PC-9 (cell line): ENCODE measurements at regions of chrX and their contacts with region 1.

Region 1: DNA sequence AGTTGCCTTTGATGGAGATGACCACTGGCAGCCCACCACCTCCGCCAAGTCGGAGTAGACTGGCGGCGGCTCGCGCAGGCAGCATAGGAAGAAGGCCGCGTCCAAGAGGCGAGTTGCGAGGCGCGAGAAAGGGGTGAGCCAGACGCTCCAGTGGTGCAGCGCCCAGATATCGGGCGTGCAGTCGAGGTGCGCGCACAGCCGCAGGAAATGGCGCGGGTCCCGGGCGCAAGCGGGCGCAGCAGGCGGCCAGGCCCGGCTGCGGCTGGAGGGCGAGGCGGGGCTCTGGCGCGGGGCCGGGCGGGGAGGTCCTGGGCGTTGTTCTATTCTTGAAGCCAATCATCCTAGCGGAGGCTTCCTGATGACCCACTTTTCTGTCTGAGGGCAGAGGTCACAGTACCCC is 13.2 kb upstream of the PGRMC1 start:
- DNase-seq: no peak
- H3K4me3 ChIP-seq: no peak overlapping the region
- H3K27ac ChIP-seq: no peak overlapping the region
- H3K4me1 ChIP-seq: no peaks in the 10 kb centered on the region
- H3K27me3 ChIP-seq: no peaks in the 10 kb centered on the region
- CTCF ChIP-seq: no peak

Region 2: GRCh38 chrX:118847676-118848075 is 375.3 kb before region 1 on chrX:
- CTCF ChIA-PET with region 1: no interaction called
- POLR2A ChIA-PET with region 1: no interaction called
- intact Hi-C with region 1: loop called (anchors 1 kb)
- DNase-seq: peak in 1 of 2 experiments; percentile 59
- H3K4me3 ChIP-seq: no peak overlapping the region
- H3K27ac ChIP-seq: no peak overlapping the region
- H3K4me1 ChIP-seq: no peaks in the 10 kb centered on the region
- H3K27me3 ChIP-seq: no peaks in the 10 kb centered on the region
- CTCF ChIP-seq: peak; percentile 85

Region 3: GRCh38 chrX:119181491-119181890 is 41.4 kb before region 1 on chrX:
- CTCF ChIA-PET with region 1: no interaction called
- POLR2A ChIA-PET with region 1: no interaction called
- intact Hi-C with region 1: no loop called
- DNase-seq: peak in 1 of 2 experiments; percentile 16
- H3K4me3 ChIP-seq: no peak overlapping the region
- H3K27ac ChIP-seq: no peak overlapping the region
- H3K4me1 ChIP-seq: no peaks in the 10 kb centered on the region
- H3K27me3 ChIP-seq: no peaks in the 10 kb centered on the region
- CTCF ChIP-seq: peak; percentile 69

Region 4: GRCh38 chrX:119309661-119310267 is 86.8 kb after region 1 on chrX:
- CTCF ChIA-PET with region 1: interaction called, 16 read pairs
- POLR2A ChIA-PET with region 1: no interaction called
- intact Hi-C with region 1: no loop called
- DNase-seq: no peak
- H3K4me3 ChIP-seq: no peak overlapping the region
- H3K27ac ChIP-seq: no peak overlapping the region
- H3K4me1 ChIP-seq: peaks cover 5% of the 10 kb centered on the region; the same call in 1 of the 2 replicates
- H3K27me3 ChIP-seq: no peaks in the 10 kb centered on the region
- CTCF ChIP-seq: no peak